HEK293T (cell line): ENCODE measurements at regions of chr7 and their contacts with region 1.

Region 1: GRCh38 chr7:150778738-150779301 is 21.3 kb downstream of the TMEM176B start:
- DNase-seq: peak; percentile 89

Region 2: DNA sequence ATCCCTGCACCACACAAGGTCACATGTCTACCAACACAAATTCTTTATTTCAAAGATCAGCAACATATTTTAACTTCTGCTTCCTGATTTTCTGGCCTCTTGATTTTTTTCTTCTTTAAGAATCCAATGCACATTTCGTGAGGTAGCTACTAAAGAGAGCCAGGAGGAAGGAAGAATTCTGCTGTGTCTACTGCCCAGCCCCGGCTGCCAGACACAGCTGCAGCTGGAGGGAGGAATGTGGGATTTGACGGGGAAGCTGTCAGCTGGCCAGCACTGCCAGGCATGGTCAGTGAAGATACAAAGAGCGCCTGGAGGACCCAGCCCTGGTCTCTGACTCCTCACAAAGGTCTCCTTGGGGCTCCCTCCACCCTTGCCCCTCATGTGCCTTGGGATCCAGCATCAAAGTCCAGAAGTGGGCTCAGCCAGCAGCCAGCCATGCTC is 66.6 kb after region 1 on chr7:
- CTCF ChIA-PET with region 1: no interaction called
- POLR2A ChIA-PET with region 1: no interaction called
- DNase-seq: no peak

Region 3: DNA sequence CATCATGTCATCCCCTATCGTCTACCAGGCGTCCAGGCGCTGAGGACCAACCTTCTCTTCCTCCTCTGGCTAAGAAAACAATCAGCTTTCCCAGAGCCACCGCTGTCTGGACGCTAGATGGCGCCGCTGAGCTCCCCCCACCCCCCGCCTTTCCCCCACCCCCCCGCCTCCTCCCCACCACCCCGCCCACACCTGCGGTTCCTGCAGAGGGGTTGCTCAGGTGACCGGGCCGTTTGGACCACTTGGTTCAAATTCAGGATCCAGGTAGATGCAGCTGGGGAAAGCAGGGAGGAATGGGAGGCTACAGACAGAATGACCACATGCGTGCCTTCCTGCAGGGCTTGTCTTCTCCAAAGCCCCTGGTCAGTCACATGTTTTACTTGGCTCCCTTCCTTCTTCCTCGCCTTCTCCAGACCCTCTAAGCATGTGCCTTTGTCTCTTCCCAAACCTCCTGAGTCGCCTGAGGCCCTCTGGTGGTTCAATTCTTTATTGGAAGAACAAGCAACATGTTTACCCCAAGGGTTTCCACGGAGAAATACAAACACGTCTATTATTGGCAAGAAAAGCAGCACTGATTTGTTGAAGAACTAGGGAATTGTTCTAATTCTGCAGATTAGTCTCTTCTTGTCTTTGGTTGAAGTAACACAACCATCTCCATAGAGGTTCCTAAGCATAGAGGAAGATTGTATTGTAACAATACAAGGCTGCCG is 98.2 kb after region 1 on chr7:
- CTCF ChIA-PET with region 1: interaction called, 10 read pairs
- POLR2A ChIA-PET with region 1: no interaction called
- DNase-seq: peak; percentile 93